Psoas muscle (tissue), 8 donors: ENCODE measurements at regions of chr5 and their contacts with region 1.

Region 1: GRCh38 chr5:154072414-154073171 is 33.8 kb downstream of the MFAP3 start:
- DNase-seq: peak; percentile 84 to 89
- ATAC-seq: peak; percentile 89 to 97 (median 92)
- H3K4me3 ChIP-seq: no peak overlapping the region
- H3K27ac ChIP-seq: no peak overlapping the region
- H3K4me1 ChIP-seq: peaks cover 8% of the 10 kb centered on the region
- H3K27me3 ChIP-seq: no peaks in the 10 kb centered on the region
- CTCF ChIP-seq: peak; percentile 96

Region 2: DNA sequence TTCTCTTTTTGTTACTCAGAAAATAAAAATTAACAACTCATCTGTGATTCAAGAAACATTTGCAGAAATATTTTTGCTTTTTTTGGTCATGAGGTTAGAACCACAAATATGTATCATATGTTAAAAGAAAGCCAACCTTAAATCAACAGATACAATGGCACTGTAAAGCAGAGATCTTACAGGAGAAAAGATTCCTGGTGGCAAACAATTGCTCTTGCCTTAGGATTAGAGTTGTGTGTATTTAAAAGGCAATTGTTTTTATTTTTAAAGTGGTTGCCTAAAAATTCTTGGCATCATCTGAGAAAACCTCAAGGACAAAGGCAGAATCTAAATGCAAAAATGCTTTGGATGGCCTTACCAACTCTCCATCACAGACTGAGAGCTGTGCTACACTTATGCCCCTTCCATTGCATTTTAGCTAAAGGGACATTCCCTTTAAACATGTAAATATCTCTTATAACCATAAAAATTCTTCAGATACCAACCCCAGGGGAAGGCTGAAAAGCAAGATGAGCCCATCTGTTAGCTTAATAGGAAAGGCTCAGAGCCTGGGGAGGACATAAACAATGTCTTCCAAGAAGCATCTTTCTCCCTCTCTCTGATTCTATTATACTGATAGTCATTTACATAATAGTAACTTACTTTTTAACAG is 134.3 kb before region 1 on chr5:
- intact Hi-C with region 1: no loop called
- DNase-seq: no peak
- ATAC-seq: no peak
- H3K4me3 ChIP-seq: no peak overlapping the region
- H3K27ac ChIP-seq: no peak overlapping the region
- H3K4me1 ChIP-seq: no peaks in the 10 kb centered on the region
- H3K27me3 ChIP-seq: no peaks in the 10 kb centered on the region
- CTCF ChIP-seq: no peak

Region 3: DNA sequence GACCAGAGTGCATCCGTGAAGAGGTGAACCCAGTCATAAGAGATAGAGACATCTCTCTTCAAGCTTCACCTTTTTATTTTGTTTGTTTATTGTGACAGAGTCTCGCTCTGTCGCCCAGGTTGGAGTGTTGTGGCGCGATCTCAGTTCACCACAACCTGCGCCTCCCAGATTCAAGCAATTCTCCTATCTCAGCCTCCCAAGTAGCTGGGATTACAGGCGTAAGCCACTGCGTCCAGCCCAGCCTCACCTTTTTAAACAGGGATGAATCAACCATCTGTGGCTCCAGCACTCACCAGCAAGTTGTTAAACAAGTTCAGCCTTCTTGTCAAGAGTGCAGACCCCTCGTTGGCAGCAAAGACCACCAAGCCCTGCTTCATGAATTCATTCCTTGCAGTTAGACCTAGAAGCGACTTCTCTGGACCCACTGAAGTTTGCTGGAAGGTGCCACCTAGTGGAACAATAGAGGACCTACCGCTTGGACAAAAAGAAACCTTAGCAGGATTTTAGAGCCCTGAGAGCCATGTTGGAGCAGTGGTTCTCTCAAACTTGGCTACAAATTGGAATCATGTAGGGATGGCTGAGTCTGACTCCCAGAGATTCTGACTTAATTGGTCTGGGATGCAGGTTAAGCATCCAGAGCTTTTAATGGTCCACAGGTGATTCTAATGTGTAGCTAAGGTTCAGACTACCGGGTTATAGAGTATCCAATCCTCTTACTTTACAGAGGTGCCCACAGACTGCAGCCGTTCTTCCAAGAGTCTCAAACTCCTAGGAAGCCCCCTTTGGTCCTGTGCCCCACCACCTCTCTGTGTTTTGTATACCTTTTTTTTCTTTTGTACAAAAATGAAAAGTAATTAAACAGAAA is 107.5 kb after region 1 on chr5:
- intact Hi-C with region 1: loop called (anchors 2 to 5 kb)
- DNase-seq: no peak
- ATAC-seq: peak; percentile 62 to 87 (median 78)
- H3K4me3 ChIP-seq: no peak overlapping the region
- H3K27ac ChIP-seq: no peak overlapping the region
- H3K4me1 ChIP-seq: no peaks in the 10 kb centered on the region
- H3K27me3 ChIP-seq: no peaks in the 10 kb centered on the region
- CTCF ChIP-seq: peak; percentile 77

Region 4: DNA sequence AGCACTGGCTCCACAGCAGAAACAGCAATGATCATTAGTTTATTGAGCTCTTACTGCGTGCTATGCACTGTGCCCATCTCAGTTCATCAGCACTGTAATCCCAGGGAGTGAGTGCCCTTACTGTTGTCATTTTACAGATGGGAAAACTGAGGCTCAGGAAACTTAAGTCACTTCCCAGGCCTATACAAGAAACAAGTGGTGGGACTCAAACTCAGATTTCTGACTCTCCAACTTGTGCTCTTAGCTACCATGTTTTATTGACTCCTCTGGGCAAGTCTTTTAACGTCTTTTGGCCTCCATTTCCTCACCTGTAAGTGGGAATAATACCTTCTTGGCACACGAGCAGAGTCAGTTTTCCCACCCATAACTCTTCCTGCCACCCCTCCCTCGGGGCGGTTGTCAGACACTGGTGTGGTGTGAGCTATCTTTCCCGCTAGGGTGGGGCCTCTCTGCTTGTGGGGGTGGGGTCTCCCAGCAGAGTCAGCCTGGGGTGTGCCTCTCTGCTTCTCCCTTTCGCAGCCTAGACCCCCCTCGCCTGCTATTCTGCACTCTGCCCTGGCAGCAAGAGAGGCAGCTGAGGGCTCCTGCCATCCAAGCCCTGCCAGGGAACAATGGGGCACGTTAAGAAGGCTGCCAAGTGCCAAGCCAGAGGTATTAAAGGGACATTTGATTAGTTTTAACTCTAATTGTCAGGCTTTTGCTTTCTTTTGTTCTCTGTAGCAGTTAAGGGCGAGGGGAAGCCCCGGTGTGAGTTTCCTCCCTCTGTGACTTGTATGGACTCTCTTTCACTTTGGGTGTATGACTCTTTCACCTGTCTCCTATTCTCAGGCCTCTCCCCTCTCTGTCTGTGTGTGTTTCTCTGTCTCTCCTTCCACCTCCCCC is 130.0 kb after region 1 on chr5:
- intact Hi-C with region 1: no loop called
- DNase-seq: no peak
- ATAC-seq: no peak
- H3K4me3 ChIP-seq: no peak overlapping the region
- H3K27ac ChIP-seq: no peak overlapping the region
- H3K4me1 ChIP-seq: peaks cover 3% of the 10 kb centered on the region
- H3K27me3 ChIP-seq: no peaks in the 10 kb centered on the region
- CTCF ChIP-seq: no peak